Activated B cell treated with CpG ODN at 0.5 μM for 24 hours (primary cell): ENCODE measurements at regions of chr6 and their contacts with region 1.

Region 1: DNA sequence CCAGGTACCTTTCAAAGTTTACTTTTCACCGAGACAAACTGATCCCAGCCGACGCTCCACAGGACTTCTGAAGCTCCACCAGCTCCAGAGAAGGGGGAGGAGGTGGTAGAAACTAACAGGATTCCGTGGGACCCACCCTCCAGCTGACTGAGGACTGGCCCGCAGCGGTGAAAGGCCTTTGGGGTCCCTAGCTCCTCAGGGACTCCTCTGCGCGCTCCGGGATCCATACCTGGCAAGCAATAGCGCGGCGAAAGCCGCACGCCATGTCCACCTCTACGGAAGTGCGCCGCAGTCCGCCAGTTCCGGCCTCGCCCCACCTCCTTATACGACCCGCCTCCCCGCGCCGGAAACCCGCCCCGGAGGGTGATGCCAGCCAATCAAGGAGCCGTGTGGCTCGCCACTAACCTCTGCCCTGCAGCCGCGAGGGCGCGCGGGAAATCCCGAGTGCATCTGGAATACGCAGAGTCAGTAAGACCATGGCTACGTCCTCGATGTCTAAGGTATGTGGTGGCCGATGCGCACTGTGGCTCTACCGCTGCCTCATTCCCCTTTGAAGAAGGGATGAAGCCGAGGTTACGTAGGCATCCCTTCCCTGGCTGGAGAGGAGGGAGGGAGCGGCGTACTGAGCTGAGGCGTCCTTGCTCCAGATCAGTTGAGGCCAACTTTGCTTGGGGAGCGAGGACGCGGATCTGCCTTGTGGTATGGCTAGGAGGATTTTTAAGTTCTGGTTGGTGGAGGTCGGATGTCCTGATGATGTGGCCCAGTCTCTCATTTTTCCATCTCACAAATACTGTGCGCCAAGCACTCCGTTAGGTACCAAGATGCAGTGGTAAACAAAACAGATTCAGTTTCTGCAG is at the starts of genes ORC3 and RARS2:
- DNase-seq: peak; percentile 90
- ATAC-seq: peak; percentile 99
- H3K4me3 Mint-ChIP-seq: peak within 1 kb of the TSS; percentile 97
- H3K27ac Mint-ChIP-seq: peak within 1 kb of the TSS; percentile 88
- H3K4me1 Mint-ChIP-seq: peaks cover 50% of the 10 kb centered on the region
- H3K27me3 Mint-ChIP-seq: no peaks in the 10 kb centered on the region
- CTCF ChIP-seq: no peak
- total RNA-seq, gene ORC3: 24.6 and 27.7 TPM in 2 replicates
- total RNA-seq, gene RARS2: 24.8 and 27.0 TPM in 2 replicates

Region 2: GRCh38 chr6:87322304-87323212 is 267.4 kb before region 1 on chr6 and contains the start of gene SMIM8:
- CTCF ChIA-PET with region 1: no interaction called
- POLR2A ChIA-PET with region 1: no interaction called
- intact Hi-C with region 1: loop called (anchors 2 kb)
- DNase-seq: peak; percentile 89
- ATAC-seq: peak; percentile 100
- H3K4me3 Mint-ChIP-seq: peak within 1 kb of the TSS; percentile 98
- H3K27ac Mint-ChIP-seq: peak within 1 kb of the TSS; percentile 90
- H3K4me1 Mint-ChIP-seq: peaks cover 25% of the 10 kb centered on the region
- H3K27me3 Mint-ChIP-seq: no peaks in the 10 kb centered on the region
- CTCF ChIP-seq: peak; percentile 79
- total RNA-seq, gene SMIM8: 11.1 and 14.4 TPM in 2 replicates

Region 3: DNA sequence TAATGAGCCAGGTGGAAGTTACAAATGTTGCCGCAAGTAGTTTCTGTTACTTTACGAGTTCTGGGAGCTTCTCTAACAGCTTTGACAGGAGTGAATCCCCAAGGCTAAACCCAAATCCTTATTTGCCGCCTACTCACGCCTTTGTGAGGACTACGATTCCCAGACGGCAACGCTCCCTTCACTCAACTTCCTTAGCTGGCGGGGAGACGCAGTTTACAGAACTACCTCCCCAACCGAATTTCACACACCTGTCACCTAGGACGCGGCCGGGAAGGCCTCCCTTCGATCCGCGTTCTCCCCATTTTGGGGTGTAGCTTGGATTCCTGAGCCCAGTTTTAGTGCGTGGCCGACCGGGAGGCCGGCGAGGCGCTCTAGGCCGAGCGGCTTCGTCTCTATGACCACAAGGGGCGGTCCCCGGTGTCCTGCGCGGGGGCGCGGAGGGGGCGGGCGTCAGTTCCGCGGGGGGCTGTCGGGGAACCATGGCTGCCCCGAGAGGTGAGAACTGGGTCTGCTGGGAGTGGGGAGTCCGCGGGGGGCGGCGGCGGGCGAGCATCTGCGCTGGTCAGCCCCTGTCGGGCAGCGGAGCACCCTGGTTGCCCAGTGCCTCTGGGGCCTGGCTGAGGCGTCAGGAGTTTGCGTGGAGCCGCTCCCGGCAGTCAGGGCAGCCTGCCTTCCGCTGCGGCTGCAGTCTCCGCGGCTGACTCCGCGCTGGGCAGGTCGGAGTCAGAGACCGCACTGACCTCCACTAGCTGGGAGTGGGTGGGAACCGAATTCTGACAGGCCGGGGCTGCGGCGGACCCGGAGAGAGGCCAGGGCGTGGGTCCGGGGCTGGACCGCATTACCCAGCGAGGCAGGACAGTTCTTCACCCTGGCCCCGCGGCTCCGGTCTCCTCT is 117.1 kb before region 1 on chr6 and contains the start of gene SLC35A1:
- CTCF ChIA-PET with region 1: no interaction called
- POLR2A ChIA-PET with region 1: no interaction called
- intact Hi-C with region 1: loop called (anchors 1 kb)
- DNase-seq: peak; percentile 88
- ATAC-seq: peak; percentile 97
- H3K4me3 Mint-ChIP-seq: peak within 1 kb of the TSS; percentile 97
- H3K27ac Mint-ChIP-seq: peak within 1 kb of the TSS; percentile 98
- H3K4me1 Mint-ChIP-seq: peaks cover 12% of the 10 kb centered on the region
- H3K27me3 Mint-ChIP-seq: peaks cover 6% of the 10 kb centered on the region
- CTCF ChIP-seq: no peak
- total RNA-seq, gene SLC35A1: 7.5 and 8.7 TPM in 2 replicates

Region 4: GRCh38 chr6:88165844-88166492 is 576.0 kb after region 1 on chr6 and contains the start of gene CNR1:
- CTCF ChIA-PET with region 1: no interaction called
- POLR2A ChIA-PET with region 1: no interaction called
- intact Hi-C with region 1: loop called (anchors 10 kb)
- DNase-seq: no peak
- ATAC-seq: peak; percentile 59
- H3K4me3 Mint-ChIP-seq: peak within 1 kb of the TSS; percentile 91
- H3K27ac Mint-ChIP-seq: peak within 1 kb of the TSS; percentile 87
- H3K4me1 Mint-ChIP-seq: peaks cover 34% of the 10 kb centered on the region
- H3K27me3 Mint-ChIP-seq: peaks cover 15% of the 10 kb centered on the region
- CTCF ChIP-seq: no peak
- total RNA-seq, gene CNR1: 2.7 and 4.4 TPM in 2 replicates

Region 5: GRCh38 chr6:89352278-89353117 is 1762.6 kb after region 1 on chr6 and contains the start of gene UBE2J1:
- CTCF ChIA-PET with region 1: no interaction called
- POLR2A ChIA-PET with region 1: no interaction called
- intact Hi-C with region 1: loop called (anchors 5 kb)
- DNase-seq: peak; percentile 83
- ATAC-seq: peak; percentile 77
- H3K4me3 Mint-ChIP-seq: peak within 1 kb of the TSS; percentile 94
- H3K27ac Mint-ChIP-seq: peak within 1 kb of the TSS; percentile 94
- H3K4me1 Mint-ChIP-seq: peaks cover 86% of the 10 kb centered on the region
- H3K27me3 Mint-ChIP-seq: no peaks in the 10 kb centered on the region
- CTCF ChIP-seq: no peak
- total RNA-seq, gene UBE2J1: 32.3 and 32.8 TPM in 2 replicates